Activated CD8-positive, alpha-beta T cell treated with anti-CD3 and anti-CD28 coated beads for 36 hours (primary cell): ENCODE measurements at regions of chr22 and their contacts with region 1.

Region 1: GRCh38 chr22:17117890-17118289 is 3.3 kb downstream of the TMEM121B start:
- DNase-seq: peak; percentile 31
- ATAC-seq: peak; percentile 23
- H3K4me3 Mint-ChIP-seq: no peak overlapping the region
- H3K27ac Mint-ChIP-seq: peak overlapping the region; percentile 35
- H3K4me1 Mint-ChIP-seq: peaks cover 49% of the 10 kb centered on the region
- H3K27me3 Mint-ChIP-seq: peaks cover 13% of the 10 kb centered on the region
- CTCF ChIP-seq: no peak

Region 2: DNA sequence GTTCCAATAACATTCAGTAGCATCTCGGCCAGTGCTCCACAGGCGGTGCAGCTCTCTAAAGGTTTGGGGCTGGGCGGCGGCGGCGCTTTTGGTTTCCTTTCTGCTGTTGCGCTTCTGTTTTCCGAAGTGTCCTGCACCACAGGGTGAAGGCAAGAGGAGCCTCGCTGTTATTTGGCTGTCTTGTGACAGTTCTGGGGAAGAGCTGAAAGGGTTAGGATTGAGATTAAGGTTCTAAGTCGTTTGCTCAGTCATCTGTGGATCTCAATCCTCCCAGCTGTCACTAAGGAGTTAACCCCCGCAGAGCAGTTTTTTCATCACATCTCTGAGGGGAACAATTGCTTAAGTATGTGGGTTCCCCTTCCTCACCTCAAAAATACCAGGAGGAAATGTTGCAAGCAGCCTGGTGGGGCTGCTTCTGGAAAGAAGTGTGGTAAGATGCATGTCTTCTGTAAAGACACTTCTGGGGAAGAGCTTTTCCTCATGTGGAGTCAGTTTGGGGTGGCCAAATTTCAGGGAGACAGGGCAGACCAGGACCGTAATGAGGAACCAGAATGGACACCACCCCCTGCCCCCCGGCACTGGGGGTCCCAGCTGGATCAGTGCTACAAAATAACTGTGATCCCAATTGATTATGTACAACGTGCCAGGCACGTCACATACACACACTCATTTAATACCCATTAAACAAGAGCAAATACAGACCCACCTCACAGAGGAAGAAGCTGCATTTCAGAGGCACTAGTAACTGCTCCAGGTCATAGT is 10.9 kb before region 1 on chr22:
- CTCF ChIA-PET with region 1: interaction called, 18 read pairs
- POLR2A ChIA-PET with region 1: interaction called, 4 read pairs
- intact Hi-C with region 1: no loop called
- DNase-seq: peak; percentile 66
- ATAC-seq: peak; percentile 77
- H3K4me3 Mint-ChIP-seq: peak overlapping the region; percentile 42
- H3K27ac Mint-ChIP-seq: peak overlapping the region; percentile 81
- H3K4me1 Mint-ChIP-seq: peaks cover 38% of the 10 kb centered on the region
- H3K27me3 Mint-ChIP-seq: no peaks in the 10 kb centered on the region
- CTCF ChIP-seq: peak; percentile 12

Region 3: GRCh38 chr22:17149076-17149810 is 31.4 kb after region 1 on chr22:
- CTCF ChIA-PET with region 1: no interaction called
- POLR2A ChIA-PET with region 1: no interaction called
- intact Hi-C with region 1: no loop called
- DNase-seq: no peak
- ATAC-seq: no peak
- H3K4me3 Mint-ChIP-seq: no peak overlapping the region
- H3K27ac Mint-ChIP-seq: no peak overlapping the region
- H3K4me1 Mint-ChIP-seq: peaks cover 22% of the 10 kb centered on the region
- H3K27me3 Mint-ChIP-seq: no peaks in the 10 kb centered on the region
- CTCF ChIP-seq: no peak

Region 4: GRCh38 chr22:17188237-17188636 is 70.3 kb after region 1 on chr22:
- CTCF ChIA-PET with region 1: no interaction called
- POLR2A ChIA-PET with region 1: no interaction called
- intact Hi-C with region 1: no loop called
- DNase-seq: no peak
- ATAC-seq: no peak
- H3K4me3 Mint-ChIP-seq: no peak overlapping the region
- H3K27ac Mint-ChIP-seq: no peak overlapping the region
- H3K4me1 Mint-ChIP-seq: no peaks in the 10 kb centered on the region
- H3K27me3 Mint-ChIP-seq: no peaks in the 10 kb centered on the region
- CTCF ChIP-seq: no peak

Region 5: GRCh38 chr22:17234144-17234623 is 116.3 kb after region 1 on chr22:
- CTCF ChIA-PET with region 1: no interaction called
- POLR2A ChIA-PET with region 1: no interaction called
- intact Hi-C with region 1: no loop called
- DNase-seq: no peak
- ATAC-seq: no peak
- H3K4me3 Mint-ChIP-seq: no peak overlapping the region
- H3K27ac Mint-ChIP-seq: no peak overlapping the region
- H3K4me1 Mint-ChIP-seq: peaks cover 10% of the 10 kb centered on the region
- H3K27me3 Mint-ChIP-seq: no peaks in the 10 kb centered on the region
- CTCF ChIP-seq: no peak

Region 6: DNA sequence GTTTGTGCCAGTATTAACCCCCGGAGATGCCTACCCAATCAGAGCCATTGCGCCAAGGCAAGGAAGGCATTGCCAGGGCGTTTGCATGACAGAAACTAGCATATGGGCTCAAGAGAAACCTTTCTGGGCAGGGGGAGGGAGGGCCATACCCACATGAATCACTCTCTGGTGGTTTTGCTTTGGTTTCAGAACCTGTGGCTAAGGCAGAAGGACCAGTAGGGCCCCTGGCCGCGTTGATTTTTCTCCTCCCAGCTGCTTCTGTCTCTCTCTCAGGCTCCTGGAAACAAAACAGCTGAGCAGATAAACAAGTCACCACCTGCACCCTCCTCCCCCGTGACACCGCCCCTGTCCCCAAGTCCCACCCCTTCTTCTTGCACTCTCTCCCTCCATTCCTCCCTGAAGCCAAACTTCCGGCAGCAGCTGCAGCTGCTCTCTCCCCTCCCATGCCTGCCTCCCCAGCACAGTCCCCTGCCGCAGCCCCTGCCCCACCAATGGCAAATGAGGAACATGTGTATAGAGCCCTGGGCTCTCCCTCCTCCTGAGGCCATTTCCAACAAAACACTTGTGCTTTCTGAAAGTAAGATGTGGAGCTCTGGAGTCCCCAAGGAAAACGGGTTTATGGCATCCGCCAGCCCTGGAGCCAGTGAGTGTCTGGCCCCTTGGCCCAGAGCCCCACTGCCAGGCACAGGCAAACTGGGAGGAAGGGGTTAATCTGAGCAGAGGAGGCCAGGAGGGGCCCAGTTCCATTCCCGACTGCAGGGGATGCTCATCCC is 140.3 kb after region 1 on chr22:
- CTCF ChIA-PET with region 1: no interaction called
- POLR2A ChIA-PET with region 1: no interaction called
- intact Hi-C with region 1: no loop called
- DNase-seq: peak; percentile 86
- ATAC-seq: peak; percentile 95
- H3K4me3 Mint-ChIP-seq: no peak overlapping the region
- H3K27ac Mint-ChIP-seq: peak overlapping the region; percentile 46
- H3K4me1 Mint-ChIP-seq: peaks cover 18% of the 10 kb centered on the region
- H3K27me3 Mint-ChIP-seq: no peaks in the 10 kb centered on the region
- CTCF ChIP-seq: no peak